ENCODE measurements at regions of chr16 and their contacts with region 1.

Region 1: DNA sequence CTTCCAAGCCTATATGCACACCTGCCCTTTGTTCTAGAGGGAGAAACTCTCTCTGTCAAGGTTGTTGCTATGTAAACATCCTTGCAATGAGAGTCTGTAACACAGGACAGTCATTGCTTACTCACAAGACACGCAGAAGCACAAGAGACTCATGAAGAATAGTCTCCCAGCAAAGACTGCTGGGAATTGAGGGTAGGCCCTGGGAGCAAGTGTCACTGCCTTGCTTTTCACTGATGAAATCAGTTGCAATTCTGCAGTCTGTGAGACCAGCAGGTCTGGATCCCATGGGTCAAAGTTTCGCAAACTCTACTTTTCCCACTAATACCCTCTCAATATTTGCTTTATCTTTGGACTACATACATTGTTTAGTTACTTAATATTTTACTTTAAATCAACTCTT is 177.4 kb downstream of the FTO start:
- DNase-seq: peak; percentile 93
- H3K4me3 ChIP-seq: no peak overlapping the region
- H3K27ac ChIP-seq: peak overlapping the region; percentile 91
- H3K4me1 ChIP-seq: no peaks in the 10 kb centered on the region
- H3K27me3 ChIP-seq: no peaks in the 10 kb centered on the region
- CTCF ChIP-seq: no peak

Region 2: DNA sequence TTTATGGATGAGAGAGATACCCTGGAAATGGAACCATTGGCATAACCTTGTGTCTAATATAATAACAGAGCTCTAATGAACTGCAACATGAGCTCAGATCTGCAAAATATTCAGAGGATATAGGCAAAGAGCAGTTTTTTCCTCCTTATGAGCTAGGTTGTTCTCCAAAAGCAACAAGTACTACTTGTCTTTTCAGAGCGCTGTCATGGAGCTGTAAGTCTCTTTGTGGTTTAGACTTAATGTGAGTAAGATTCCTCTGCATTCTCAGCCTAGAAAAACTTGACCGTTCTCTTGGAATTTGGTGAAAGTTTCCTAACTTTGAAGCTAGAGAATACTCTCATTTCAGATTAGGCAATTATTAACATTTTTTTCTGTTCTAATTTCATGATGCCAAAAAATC is 92.2 kb before region 1 on chr16:
- CTCF ChIA-PET with region 1: no interaction called
- dilution Hi-C with region 1: no loop called
- in situ Hi-C with region 1: loop called (anchors 10 kb)
- intact Hi-C with region 1: no loop called
- DNase-seq: peak; percentile 59
- H3K4me3 ChIP-seq: no peak overlapping the region
- H3K27ac ChIP-seq: no peak overlapping the region
- H3K4me1 ChIP-seq: peaks cover 24% of the 10 kb centered on the region
- H3K27me3 ChIP-seq: no peaks in the 10 kb centered on the region
- CTCF ChIP-seq: no peak

Region 3: GRCh38 chr16:53809088-53809932 is 72.1 kb before region 1 on chr16:
- CTCF ChIA-PET with region 1: no interaction called
- dilution Hi-C with region 1: no loop called
- in situ Hi-C with region 1: no loop called
- intact Hi-C with region 1: loop called (anchors 5 kb)
- DNase-seq: peak; percentile 78
- H3K4me3 ChIP-seq: no peak overlapping the region
- H3K27ac ChIP-seq: peak overlapping the region; percentile 22
- H3K4me1 ChIP-seq: peaks cover 25% of the 10 kb centered on the region
- H3K27me3 ChIP-seq: no peaks in the 10 kb centered on the region
- CTCF ChIP-seq: no peak

Region 4: DNA sequence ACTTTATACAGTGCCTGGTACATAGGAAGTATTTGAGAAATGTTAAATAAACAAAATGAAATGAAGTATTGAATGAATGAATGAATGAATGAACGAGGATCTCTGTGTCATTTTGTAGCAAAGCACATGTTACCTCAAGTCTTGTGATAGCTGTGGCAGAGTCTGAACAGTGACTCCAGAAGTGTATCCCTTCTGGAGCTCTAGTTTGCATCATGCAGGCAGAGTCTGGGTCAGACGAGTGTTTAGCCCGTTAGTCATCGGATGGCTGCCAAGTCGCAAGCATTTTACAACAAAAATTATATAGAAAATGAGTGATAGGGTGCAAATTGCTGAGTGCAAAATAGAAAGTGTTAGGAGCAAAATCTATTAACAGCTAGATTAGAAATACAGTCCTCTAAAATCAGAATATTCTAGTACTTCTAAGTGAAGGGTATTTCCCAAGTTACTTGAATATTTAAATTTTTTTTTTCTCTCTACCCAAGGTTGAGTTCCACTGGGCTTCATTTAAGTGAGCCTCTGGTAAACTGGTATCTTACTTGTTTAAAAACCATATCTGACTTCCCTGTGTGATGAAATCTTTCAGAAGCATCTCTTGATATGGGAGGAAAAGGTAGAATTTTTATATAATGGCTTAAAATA is 64.1 kb before region 1 on chr16:
- CTCF ChIA-PET with region 1: no interaction called
- dilution Hi-C with region 1: no loop called
- in situ Hi-C with region 1: no loop called
- intact Hi-C with region 1: loop called (anchors 2 kb)
- DNase-seq: peak; percentile 87
- H3K4me3 ChIP-seq: no peak overlapping the region
- H3K27ac ChIP-seq: peak overlapping the region; percentile 87
- H3K4me1 ChIP-seq: peaks cover 40% of the 10 kb centered on the region
- H3K27me3 ChIP-seq: no peaks in the 10 kb centered on the region
- CTCF ChIP-seq: no peak

Region 5: GRCh38 chr16:53839150-53839549 is 42.2 kb before region 1 on chr16:
- CTCF ChIA-PET with region 1: no interaction called
- dilution Hi-C with region 1: no loop called
- in situ Hi-C with region 1: no loop called
- intact Hi-C with region 1: loop called (anchors 5 kb)
- DNase-seq: peak; percentile 70
- H3K4me3 ChIP-seq: peak overlapping the region in 1 of 3 experiments; percentile 19
- H3K27ac ChIP-seq: peak overlapping the region; percentile 90
- H3K4me1 ChIP-seq: peaks cover 4% of the 10 kb centered on the region
- H3K27me3 ChIP-seq: no peaks in the 10 kb centered on the region
- CTCF ChIP-seq: no peak

Region 6: GRCh38 chr16:53865494-53865863 is 15.9 kb before region 1 on chr16:
- CTCF ChIA-PET with region 1: no interaction called
- dilution Hi-C with region 1: no loop called
- in situ Hi-C with region 1: no loop called
- intact Hi-C with region 1: loop called (anchors 1 kb)
- DNase-seq: peak; percentile 84
- H3K4me3 ChIP-seq: no peak overlapping the region
- H3K27ac ChIP-seq: peak overlapping the region; percentile 97
- H3K4me1 ChIP-seq: peaks cover 24% of the 10 kb centered on the region
- H3K27me3 ChIP-seq: no peaks in the 10 kb centered on the region
- CTCF ChIP-seq: no peak

Region 7: GRCh38 chr16:54027126-54027922 is 146.0 kb after region 1 on chr16:
- CTCF ChIA-PET with region 1: no interaction called
- dilution Hi-C with region 1: no loop called
- in situ Hi-C with region 1: no loop called
- intact Hi-C with region 1: no loop called
- DNase-seq: peak; percentile 54
- H3K4me3 ChIP-seq: no peak overlapping the region
- H3K27ac ChIP-seq: peak overlapping the region; percentile 39
- H3K4me1 ChIP-seq: peaks cover 18% of the 10 kb centered on the region
- H3K27me3 ChIP-seq: no peaks in the 10 kb centered on the region
- CTCF ChIP-seq: no peak